ENCODE measurements at regions of chr19 and their contacts with region 1.

Region 1: DNA sequence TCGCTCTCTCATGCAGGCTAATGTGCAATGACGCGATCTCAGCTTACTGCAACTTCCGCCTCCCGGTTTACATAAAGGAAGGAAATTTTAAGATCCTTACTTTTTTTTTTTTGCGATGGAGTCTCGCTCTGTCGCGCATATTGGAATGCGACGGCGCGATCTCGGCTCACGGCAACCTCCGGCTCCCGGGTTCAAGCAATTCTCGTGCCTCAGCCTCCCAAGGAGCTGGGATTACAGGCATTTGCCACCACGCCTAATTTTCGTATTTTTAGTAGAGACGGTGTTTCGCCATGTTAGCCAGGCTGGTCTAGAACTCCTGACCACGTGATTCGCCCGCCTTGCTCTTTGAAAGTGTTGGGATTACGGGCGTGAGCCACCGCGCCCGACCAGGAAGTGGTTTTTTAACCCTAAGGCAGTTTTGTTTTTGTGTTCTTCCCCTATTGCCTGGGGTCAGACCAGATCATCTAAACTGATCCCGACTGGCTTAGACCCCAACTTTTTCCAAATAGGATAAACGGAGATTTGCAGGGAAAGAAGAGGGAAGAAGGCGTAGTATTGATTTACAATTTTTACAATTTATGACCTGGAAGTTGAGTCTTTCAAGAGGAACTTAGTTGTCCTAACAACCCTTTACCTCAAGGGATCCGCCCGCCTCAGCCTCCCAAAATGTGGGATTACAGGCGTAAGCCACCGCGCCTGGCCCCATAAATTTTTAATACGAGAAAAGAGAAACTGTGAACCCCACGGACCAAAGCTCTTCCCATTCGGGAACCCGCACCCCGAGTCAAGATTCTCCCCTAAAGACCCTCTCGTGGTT is 142.0 kb downstream of the ZNF737 start:
- DNase-seq: peak; percentile 52 to 57
- ATAC-seq: peak; percentile 52 to 79 (median 69)
- H3K4me3 ChIP-seq: peak overlapping the region; percentile 10 to 80 (median 68)
- H3K27ac ChIP-seq: peak overlapping the region; percentile 49 to 90 (median 81)
- H3K4me1 ChIP-seq: peaks cover 0 to 7% (median 0%) of the 10 kb centered on the region in 9 donors
- H3K27me3 ChIP-seq: no peaks in the 10 kb centered on the region
- CTCF ChIP-seq: no peak

Region 2: GRCh38 chr19:20388826-20389225 is 34.8 kb before region 1 on chr19:
- intact Hi-C with region 1: loop called in 1 of 10 experiments (anchors 2 kb)
- DNase-seq: no peak
- ATAC-seq: no peak
- H3K4me3 ChIP-seq: no peak overlapping the region
- H3K27ac ChIP-seq: no peak overlapping the region
- H3K4me1 ChIP-seq: no peaks in the 10 kb centered on the region
- H3K27me3 ChIP-seq: no peaks in the 10 kb centered on the region
- CTCF ChIP-seq: no peak

Region 3: GRCh38 chr19:20616071-20616470 is 192.5 kb after region 1 on chr19:
- intact Hi-C with region 1: no loop called
- DNase-seq: no peak
- ATAC-seq: no peak
- H3K4me3 ChIP-seq: no peak overlapping the region
- H3K27ac ChIP-seq: no peak overlapping the region
- H3K4me1 ChIP-seq: no peaks in the 10 kb centered on the region
- H3K27me3 ChIP-seq: no peaks in the 10 kb centered on the region
- CTCF ChIP-seq: no peak